ENCODE measurements at regions of chr10 and their contacts with region 1.

Region 1: DNA sequence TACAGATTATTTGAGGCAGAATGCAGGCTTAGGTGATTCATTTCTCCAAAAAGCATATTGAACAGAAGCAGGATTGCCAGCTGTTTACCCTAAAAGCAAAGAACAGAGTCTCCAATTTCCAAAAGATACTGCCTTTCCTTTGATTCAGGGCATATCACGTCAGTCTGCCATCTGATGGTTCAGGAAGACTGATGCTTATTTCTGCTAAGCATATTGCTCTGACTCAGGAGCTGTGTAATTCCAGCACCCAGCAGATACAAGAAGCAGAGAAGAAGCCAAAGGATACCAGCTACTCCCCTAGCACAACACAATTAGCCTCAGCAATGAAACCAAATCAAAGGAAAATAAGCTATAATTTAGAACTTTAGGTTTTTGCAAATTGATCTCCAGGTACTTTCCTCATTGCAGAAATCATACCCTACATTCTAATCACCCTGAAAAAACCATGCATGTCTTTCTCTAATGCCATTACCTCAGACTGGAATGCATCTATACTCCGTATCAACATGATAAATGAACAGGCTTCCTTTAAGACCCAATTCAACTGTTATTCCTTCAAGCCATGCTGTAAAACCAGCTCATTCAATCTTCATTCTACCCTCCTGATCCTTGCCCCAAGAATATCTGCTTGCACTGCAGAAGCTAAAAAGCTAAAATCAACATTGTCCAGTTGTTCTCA is 55.1 kb downstream of the ABI1 start:
- DNase-seq: no peak
- ATAC-seq: no peak
- H3K4me3 ChIP-seq: no peak overlapping the region
- H3K4me3 Mint-ChIP-seq: peak overlapping the region; percentile 24
- H3K27ac ChIP-seq: no peak overlapping the region
- H3K27ac Mint-ChIP-seq: peak overlapping the region; percentile 2
- H3K4me1 ChIP-seq: peaks cover 41% of the 10 kb centered on the region
- H3K4me1 Mint-ChIP-seq: peaks cover 81% of the 10 kb centered on the region
- H3K27me3 ChIP-seq: no peaks in the 10 kb centered on the region
- H3K27me3 Mint-ChIP-seq: no peaks in the 10 kb centered on the region
- CTCF ChIP-seq: no peak

Region 2: DNA sequence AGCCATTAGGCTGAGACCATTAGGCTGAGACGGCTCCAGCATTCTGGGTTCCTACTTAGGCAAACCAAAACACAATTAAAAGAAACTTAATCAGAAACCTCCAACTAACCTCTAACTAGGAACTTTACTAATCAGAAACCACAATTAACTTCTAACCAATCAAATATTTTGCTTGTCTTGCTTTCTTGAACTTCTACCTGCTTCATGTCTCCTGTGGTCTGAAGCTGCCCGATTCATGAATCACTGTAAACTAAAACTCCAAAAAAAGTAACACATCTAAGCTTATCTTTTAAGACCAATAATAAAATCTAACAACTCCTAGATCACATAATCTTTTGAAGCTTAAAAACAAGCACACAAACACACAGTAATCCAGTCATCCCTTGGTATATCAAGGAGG is 32.1 kb before region 1 on chr10:
- CTCF ChIA-PET with region 1: no interaction called
- POLR2A ChIA-PET with region 1: no interaction called
- intact Hi-C with region 1: loop called in 1 of 2 experiments (anchors 5 kb)
- DNase-seq: no peak
- ATAC-seq: no peak
- H3K4me3 ChIP-seq: no peak overlapping the region
- H3K4me3 Mint-ChIP-seq: no peak overlapping the region
- H3K27ac ChIP-seq: no peak overlapping the region
- H3K27ac Mint-ChIP-seq: no peak overlapping the region
- H3K4me1 ChIP-seq: peaks cover 15% of the 10 kb centered on the region
- H3K4me1 Mint-ChIP-seq: peaks cover 64% of the 10 kb centered on the region
- H3K27me3 ChIP-seq: no peaks in the 10 kb centered on the region
- H3K27me3 Mint-ChIP-seq: no peaks in the 10 kb centered on the region
- CTCF ChIP-seq: no peak

Region 3: GRCh38 chr10:26839966-26840627 is 34.4 kb after region 1 on chr10:
- CTCF ChIA-PET with region 1: no interaction called
- POLR2A ChIA-PET with region 1: no interaction called
- intact Hi-C with region 1: loop called in 1 of 2 experiments (anchors 5 kb)
- DNase-seq: no peak
- ATAC-seq: no peak
- H3K4me3 ChIP-seq: no peak overlapping the region
- H3K4me3 Mint-ChIP-seq: peak overlapping the region; percentile 0
- H3K27ac ChIP-seq: no peak overlapping the region
- H3K27ac Mint-ChIP-seq: peak overlapping the region; percentile 24
- H3K4me1 ChIP-seq: peaks cover 44% of the 10 kb centered on the region
- H3K4me1 Mint-ChIP-seq: peaks cover 78% of the 10 kb centered on the region
- H3K27me3 ChIP-seq: no peaks in the 10 kb centered on the region
- H3K27me3 Mint-ChIP-seq: no peaks in the 10 kb centered on the region
- CTCF ChIP-seq: no peak

Region 4: DNA sequence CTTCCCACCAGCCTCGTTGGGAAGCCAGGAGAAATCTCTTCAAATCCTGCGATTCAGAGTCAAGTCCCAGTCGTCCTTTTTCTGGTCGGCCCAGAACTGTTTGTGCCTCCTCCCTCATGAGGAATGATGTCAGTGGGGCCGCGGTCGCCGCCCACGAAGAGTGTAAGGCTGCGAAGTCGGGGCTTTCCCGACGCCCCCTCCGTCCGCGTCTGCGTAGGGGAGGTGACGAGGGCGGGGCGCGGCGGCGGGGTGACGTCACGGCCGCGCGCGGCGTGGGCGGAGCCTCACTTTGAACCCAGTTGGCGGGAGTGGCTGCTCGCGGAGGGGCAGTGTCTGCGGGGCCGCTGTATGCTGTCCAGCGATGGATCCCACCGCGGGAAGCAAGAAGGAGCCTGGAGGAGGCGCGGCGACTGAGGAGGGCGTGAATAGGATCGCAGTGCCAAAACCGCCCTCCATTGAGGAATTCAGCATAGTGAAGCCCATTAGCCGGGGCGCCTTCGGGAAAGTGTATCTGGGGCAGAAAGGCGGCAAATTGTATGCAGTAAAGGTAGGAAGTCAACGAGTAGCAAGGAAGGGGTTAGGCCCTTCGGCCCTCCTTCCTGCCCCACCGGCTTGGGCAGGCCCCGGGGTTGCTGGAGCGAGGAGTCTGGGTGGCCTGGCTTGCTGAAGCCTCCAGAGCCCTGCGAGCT is 349.5 kb after region 1 on chr10 and contains the start of gene MASTL:
- CTCF ChIA-PET with region 1: no interaction called
- POLR2A ChIA-PET with region 1: no interaction called
- intact Hi-C with region 1: no loop called
- DNase-seq: peak; percentile 90 to 98 (median 93)
- ATAC-seq: peak; percentile 82
- H3K4me3 ChIP-seq: peak within 1 kb of the TSS; percentile 84 to 98
- H3K4me3 Mint-ChIP-seq: peak within 1 kb of the TSS; percentile 99
- H3K27ac ChIP-seq: peak within 1 kb of the TSS; percentile 100
- H3K27ac Mint-ChIP-seq: peak within 1 kb of the TSS; percentile 100
- H3K4me1 ChIP-seq: peaks cover 27% of the 10 kb centered on the region
- H3K4me1 Mint-ChIP-seq: peaks cover 49% of the 10 kb centered on the region
- H3K27me3 ChIP-seq: no peaks in the 10 kb centered on the region
- H3K27me3 Mint-ChIP-seq: no peaks in the 10 kb centered on the region
- CTCF ChIP-seq: no peak
- total RNA-seq, gene MASTL: 33.4 to 33.6 TPM

Region 5: DNA sequence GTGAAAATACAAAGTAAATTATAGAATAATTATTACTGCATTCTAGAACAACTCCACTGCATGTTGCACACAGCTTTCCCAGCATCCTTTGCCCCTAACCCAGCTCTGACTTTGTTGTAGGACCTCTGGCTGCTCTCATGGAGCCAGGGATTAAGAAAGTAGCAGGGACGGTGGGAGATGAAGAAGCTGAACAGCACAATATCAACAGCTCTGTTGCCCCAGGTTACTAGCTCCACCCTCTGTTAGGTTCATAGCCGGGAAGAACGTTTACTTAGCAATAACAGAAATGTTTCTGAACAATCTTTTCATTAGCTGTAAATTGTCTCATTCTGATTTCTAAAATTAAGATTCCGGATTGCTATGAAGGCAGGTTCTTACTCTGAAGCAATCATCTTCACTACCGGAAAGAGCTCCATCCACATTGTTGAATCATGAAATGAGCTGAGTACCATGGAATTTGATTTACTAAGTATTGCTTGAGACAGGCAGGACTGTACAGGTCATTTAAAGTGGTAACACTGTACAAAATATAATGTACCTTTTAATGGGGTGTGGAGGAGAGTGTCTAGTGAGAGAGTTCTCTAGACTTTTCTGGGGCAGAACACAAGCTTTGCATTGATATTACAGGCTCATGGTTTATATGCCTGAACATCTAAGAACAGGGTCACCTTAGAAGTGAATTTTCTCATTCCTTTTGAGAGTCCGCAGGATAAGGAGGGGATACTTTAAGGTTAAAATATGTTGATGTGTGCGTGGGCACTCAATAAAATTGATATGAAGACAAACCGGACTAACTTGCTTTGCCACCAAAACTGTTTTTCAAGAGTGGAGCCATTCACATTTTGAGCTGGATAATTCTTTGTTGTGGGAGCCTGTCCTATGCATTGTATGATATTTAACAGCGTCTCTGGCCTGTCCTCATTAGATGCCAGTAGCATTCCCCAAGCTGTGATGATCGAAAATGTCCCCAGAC is 677.6 kb after region 1 on chr10:
- CTCF ChIA-PET with region 1: no interaction called
- POLR2A ChIA-PET with region 1: no interaction called
- intact Hi-C with region 1: no loop called
- DNase-seq: no peak
- ATAC-seq: no peak
- H3K4me3 ChIP-seq: no peak overlapping the region
- H3K4me3 Mint-ChIP-seq: no peak overlapping the region
- H3K27ac ChIP-seq: no peak overlapping the region
- H3K27ac Mint-ChIP-seq: no peak overlapping the region
- H3K4me1 ChIP-seq: no peaks in the 10 kb centered on the region
- H3K4me1 Mint-ChIP-seq: no peaks in the 10 kb centered on the region
- H3K27me3 ChIP-seq: no peaks in the 10 kb centered on the region
- H3K27me3 Mint-ChIP-seq: peaks cover 2% of the 10 kb centered on the region
- CTCF ChIP-seq: no peak